ENCODE measurements at regions of chr1 and their contacts with region 1.

Region 1: DNA sequence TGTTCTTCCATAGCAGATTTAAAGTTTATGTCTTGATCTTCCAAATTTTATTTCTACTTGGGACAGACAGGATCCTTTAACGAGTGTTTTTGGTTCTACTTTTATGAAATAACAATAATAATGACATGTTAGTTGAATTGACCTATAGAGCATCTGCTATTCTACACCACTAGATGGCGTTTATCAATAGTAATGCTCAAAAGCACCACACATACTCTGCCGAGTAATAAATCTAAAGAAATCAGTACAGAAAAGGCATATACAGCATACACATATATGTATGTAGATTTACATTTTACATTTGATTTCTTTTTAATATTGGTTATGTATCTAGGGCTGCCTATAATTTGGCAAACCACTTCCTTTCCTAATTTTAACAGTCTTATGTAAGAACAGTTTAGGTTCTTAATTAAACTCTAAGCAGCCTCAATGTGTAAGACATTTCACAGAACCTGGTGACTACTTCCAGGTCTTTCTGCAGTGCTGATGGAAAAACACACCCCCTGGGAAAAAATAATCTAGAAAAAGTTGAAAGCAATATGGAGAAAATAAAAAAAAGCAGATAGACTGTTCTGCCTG is 5.9 kb upstream of the SIPA1L2 start:
- DNase-seq: peak; percentile 78
- H3K4me3 ChIP-seq: no peak overlapping the region
- H3K27ac ChIP-seq: no peak overlapping the region
- H3K4me1 ChIP-seq: peaks cover 5% of the 10 kb centered on the region
- CTCF ChIP-seq: peak; percentile 94

Region 2: GRCh38 chr1:232508130-232508701 is 127.7 kb before region 1 on chr1:
- CTCF ChIA-PET with region 1: no interaction called
- POLR2A ChIA-PET with region 1: no interaction called
- intact Hi-C with region 1: no loop called
- DNase-seq: no peak
- H3K4me3 ChIP-seq: no peak overlapping the region
- H3K27ac ChIP-seq: no peak overlapping the region
- H3K4me1 ChIP-seq: peaks cover 37% of the 10 kb centered on the region
- CTCF ChIP-seq: 0 out of 2 replicates have a peak, but pooled peaks have one; percentile 14

Region 3: DNA sequence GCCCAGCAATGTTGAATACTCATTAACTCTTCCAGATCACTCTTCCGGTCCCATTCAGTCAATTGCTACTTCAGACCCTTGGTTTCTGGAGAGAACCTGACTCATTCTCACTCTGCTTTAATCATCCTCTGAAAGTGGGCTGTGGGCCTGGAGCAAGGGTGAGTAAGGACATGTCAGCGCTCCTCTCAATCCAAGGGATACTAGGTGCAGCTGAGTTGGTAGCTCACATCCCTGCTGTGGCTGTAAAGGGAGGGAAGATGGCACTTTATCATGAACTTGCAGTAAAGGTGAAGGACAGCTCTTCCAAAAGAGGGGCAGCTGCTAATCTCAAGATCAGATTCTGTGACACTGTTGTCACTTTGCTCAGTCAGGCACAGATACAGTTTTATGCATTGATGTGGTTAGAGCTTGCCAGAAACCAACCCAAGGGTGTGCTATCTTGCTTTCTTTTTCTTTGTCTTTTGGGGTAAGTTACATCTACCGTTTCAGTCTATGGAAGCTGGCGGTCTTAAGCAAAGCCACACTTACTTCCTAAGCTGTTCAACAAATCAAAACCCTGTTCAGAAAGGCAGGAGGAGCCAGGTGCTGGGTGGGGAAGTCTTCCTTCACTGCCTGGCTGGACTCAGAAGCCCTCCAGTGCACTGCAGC is 288.0 kb after region 1 on chr1:
- CTCF ChIA-PET with region 1: no interaction called
- POLR2A ChIA-PET with region 1: no interaction called
- intact Hi-C with region 1: no loop called
- DNase-seq: peak; percentile 7
- H3K4me3 ChIP-seq: no peak overlapping the region
- H3K27ac ChIP-seq: no peak overlapping the region
- H3K4me1 ChIP-seq: no peaks in the 10 kb centered on the region
- CTCF ChIP-seq: no peak

Region 4: DNA sequence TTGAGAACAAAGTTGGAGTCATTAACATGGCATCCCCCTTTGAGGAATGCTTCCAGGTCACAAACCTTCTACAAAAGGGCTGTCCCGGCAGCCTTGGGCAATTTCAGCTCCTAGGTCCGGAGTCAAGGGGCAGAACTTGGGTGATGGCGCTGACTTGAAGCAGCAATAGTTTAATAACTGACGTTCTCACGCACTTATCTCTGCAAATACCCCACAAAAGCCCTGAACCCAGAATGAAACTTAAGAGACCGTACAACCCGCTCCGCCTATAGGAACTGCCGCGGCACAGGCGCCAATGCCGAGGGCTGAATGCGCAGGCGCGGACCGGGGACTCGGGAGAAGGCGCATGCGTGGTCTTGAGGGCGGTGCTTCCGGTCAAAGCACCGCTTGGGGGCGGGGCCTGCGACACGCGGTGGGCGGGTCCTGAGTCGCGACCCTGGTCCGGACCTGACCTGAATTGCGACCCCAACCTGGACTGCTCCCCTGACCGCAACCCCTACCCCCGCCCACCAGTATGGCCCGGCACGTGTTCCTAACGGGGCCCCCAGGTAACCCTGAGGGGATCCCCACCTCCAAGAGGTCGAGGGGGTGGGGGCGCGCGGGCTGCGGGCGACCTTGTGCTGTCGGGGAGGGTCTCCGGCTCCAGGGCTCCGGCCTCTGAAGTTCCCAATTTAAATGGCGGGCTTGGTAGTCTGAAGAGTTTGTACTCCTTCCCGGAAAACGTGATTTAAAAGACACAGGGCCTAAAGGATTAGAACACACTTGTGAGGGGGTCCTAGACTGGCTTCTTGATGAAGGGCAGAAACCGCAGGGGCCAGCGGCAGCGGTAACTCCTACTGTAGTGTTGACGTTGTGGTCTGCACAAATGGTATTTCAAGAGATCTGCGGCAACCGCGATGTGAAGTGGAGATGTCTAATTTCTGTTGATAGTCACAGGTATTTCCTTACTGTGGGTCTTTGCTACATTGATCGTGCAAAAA is 314.6 kb after region 1 on chr1 and contains the start of gene NTPCR:
- CTCF ChIA-PET with region 1: no interaction called
- POLR2A ChIA-PET with region 1: no interaction called
- intact Hi-C with region 1: loop called (anchors 2 kb)
- DNase-seq: peak; percentile 95
- H3K4me3 ChIP-seq: peak within 1 kb of the TSS; percentile 96
- H3K27ac ChIP-seq: peak within 1 kb of the TSS; percentile 27
- H3K4me1 ChIP-seq: peaks cover 16% of the 10 kb centered on the region
- CTCF ChIP-seq: no peak
- total RNA-seq, gene NTPCR: 17.3 and 20.0 TPM in 2 replicates

Region 5: GRCh38 chr1:233240829-233241682 is 605.2 kb after region 1 on chr1:
- CTCF ChIA-PET with region 1: no interaction called
- POLR2A ChIA-PET with region 1: no interaction called
- intact Hi-C with region 1: loop called (anchors 5 kb)
- DNase-seq: no peak
- H3K4me3 ChIP-seq: no peak overlapping the region
- H3K27ac ChIP-seq: no peak overlapping the region
- H3K4me1 ChIP-seq: no peaks in the 10 kb centered on the region
- CTCF ChIP-seq: peak; percentile 45

Measured in OCI-LY7 (cell line).